ENCODE measurements at regions of chr16 and their contacts with region 1.

Region 1: GRCh38 chr16:70770626-70771552 is 30.1 kb downstream of the VAC14 start:
- DNase-seq: peak; percentile 79
- H3K4me3 ChIP-seq: no peak overlapping the region; a peak in 1 of 4 replicates
- H3K27ac ChIP-seq: 0 out of 4 replicates have a peak overlapping the region, but pooled peaks of 1 of the 2 experiments have one; percentile 5
- H3K4me1 ChIP-seq: peaks cover 0 to 3% of the 10 kb centered on the region in 2 experiments; a peak in 1 of 4 replicates
- H3K27me3 ChIP-seq: no peaks in the 10 kb centered on the region
- CTCF ChIP-seq: peak; percentile 93
- EP300 ChIP-seq: no peak
- RAD21 ChIP-seq: peak; percentile 94

Region 2: DNA sequence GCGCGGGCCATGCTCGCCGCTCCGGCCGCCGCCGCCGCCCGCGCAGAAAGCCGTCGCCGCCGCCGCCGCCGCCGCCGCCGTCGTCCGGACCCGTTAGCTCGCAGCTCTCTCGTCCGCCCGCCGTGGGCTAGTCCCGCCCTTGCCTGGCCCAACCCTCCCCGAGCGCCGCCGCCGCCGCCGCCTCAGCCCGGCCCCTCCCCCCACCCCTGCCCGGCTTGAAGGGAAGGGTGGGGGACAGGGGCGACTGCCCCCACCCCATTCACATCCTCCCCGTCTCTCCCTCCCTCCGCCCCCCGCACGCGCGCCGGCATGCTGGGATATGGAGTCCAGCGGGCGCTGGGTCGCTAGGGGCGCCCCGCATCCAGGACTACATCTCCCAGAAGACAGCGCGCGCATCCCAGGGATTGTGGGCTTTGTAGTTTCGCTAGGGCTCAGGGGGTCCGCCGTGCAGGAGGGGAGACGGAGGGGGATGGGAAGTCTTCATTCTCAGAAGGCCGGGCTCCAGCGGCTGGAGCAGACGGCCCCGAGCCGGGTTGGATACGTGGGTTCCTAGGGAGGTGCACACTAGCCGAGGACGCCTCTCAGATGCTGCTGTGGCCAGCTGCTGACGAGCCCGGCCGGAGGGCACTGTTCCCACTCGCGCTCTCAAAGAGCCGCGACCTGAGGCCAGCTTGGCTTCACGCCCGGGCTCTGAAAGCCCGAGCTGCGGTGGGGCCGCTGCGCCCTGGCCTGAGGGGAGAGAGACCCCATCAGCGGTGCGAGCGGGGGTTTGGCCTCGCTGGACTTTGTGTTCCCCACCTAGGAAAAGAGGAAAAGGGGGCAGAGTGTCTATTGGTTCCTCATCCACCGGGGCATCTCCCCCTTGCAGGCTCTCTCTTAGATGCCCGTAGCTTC is 331.7 kb before region 1 on chr16 and contains the start of gene ST3GAL2:
- CTCF ChIA-PET with region 1: no interaction called
- POLR2A ChIA-PET with region 1: no interaction called
- DNase-seq: peak; percentile 98
- H3K4me3 ChIP-seq: peak within 1 kb of the TSS; percentile 73 to 78
- H3K27ac ChIP-seq: peak within 1 kb of the TSS; percentile 90
- H3K4me1 ChIP-seq: peaks cover 9 to 29% of the 10 kb centered on the region in 2 experiments; a peak in 3 of 4 replicates
- H3K27me3 ChIP-seq: no peaks in the 10 kb centered on the region
- CTCF ChIP-seq: no peak
- EP300 ChIP-seq: peak in 1 of 2 experiments; percentile 67; a peak in 1 of 4 replicates
- RAD21 ChIP-seq: no peak
- polyA plus RNA-seq, gene ST3GAL2: 11.4 and 19.9 TPM in 2 replicates

Region 3: DNA sequence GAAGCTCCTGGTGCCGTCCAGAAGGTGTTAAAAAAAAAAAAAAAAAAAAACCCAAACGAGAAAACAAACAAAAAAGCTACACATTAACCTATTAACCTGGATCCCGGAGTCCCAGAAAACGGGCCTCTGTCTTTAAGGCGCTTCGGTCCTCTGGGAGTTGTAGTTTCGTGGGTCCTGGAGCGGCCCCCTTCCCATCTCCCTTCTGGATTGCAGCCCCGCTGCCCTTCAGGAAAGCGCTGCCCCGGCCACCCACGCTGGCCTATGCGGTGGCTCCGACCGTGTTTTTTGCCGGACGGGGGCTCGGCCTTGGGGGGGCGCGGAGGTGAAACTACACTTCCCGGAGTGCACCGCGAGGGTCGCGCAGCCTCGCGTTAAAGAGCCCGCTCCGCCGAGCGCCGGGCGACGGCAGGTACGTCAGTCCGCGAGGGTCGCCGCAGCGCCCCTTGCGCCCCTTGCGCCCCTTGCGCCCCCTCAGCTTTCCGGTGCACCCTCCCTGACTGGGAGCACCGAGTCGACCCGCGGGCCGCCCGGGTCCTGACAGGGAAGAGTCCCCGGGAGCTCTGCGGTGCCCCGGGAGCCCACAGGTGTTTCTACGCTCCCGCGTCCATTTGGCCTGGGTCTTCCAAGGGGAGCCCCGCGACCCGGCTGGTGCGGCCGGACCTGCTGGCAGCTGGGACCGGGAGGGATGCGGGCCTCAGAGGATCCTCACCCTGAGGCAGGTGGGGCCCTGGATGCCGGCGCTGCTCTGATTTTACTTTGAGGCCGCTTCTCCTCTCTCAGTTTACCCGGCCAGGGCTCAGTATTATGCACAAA is 316.5 kb before region 1 on chr16 and contains the start of gene FCSK:
- CTCF ChIA-PET with region 1: no interaction called
- POLR2A ChIA-PET with region 1: no interaction called
- DNase-seq: peak; percentile 91
- H3K4me3 ChIP-seq: peak within 1 kb of the TSS; percentile 79 to 99
- H3K27ac ChIP-seq: peak within 1 kb of the TSS; percentile 88 to 96
- H3K4me1 ChIP-seq: peaks cover 0 to 3% of the 10 kb centered on the region in 2 experiments; a peak in 1 of 4 replicates
- H3K27me3 ChIP-seq: no peaks in the 10 kb centered on the region
- CTCF ChIP-seq: no peak
- EP300 ChIP-seq: no peak
- RAD21 ChIP-seq: peak; percentile 17
- polyA plus RNA-seq, gene FCSK: 9.7 and 10.4 TPM in 2 replicates

Region 4: GRCh38 chr16:70653809-70654771 is 116.8 kb before region 1 on chr16:
- CTCF ChIA-PET with region 1: interaction called, 57 read pairs
- POLR2A ChIA-PET with region 1: interaction called, 4 read pairs
- DNase-seq: peak; percentile 83
- H3K4me3 ChIP-seq: peak overlapping the region; percentile 14 to 27; a peak in 3 of 4 replicates
- H3K27ac ChIP-seq: peak overlapping the region; percentile 22 to 53
- H3K4me1 ChIP-seq: peaks cover 0 to 7% of the 10 kb centered on the region in 2 experiments; a peak in 1 of 4 replicates
- H3K27me3 ChIP-seq: no peaks in the 10 kb centered on the region
- CTCF ChIP-seq: peak; percentile 94
- EP300 ChIP-seq: peak in 1 of 2 experiments; percentile 81; a peak in 2 of 4 replicates
- RAD21 ChIP-seq: peak; percentile 99

Region 5: GRCh38 chr16:70691223-70692129 is 79.4 kb before region 1 on chr16:
- CTCF ChIA-PET with region 1: interaction called, 39 read pairs
- POLR2A ChIA-PET with region 1: interaction called, 5 read pairs
- DNase-seq: peak; percentile 86
- H3K4me3 ChIP-seq: no peak overlapping the region
- H3K27ac ChIP-seq: peak overlapping the region; percentile 88 to 98
- H3K4me1 ChIP-seq: peaks cover 70 to 100% of the 10 kb centered on the region in 2 experiments
- H3K27me3 ChIP-seq: no peaks in the 10 kb centered on the region
- CTCF ChIP-seq: no peak
- EP300 ChIP-seq: peak; percentile 15 to 43; a peak in 2 of 4 replicates
- RAD21 ChIP-seq: no peak

Region 6: GRCh38 chr16:70725912-70726828 is 44.7 kb before region 1 on chr16:
- CTCF ChIA-PET with region 1: interaction called, 18 read pairs
- POLR2A ChIA-PET with region 1: no interaction called
- DNase-seq: no peak
- H3K4me3 ChIP-seq: no peak overlapping the region
- H3K27ac ChIP-seq: peak overlapping the region in 1 of 2 experiments; percentile 73; a peak in 1 of 4 replicates
- H3K4me1 ChIP-seq: peaks cover 0 to 34% of the 10 kb centered on the region in 2 experiments; a peak in 1 of 4 replicates
- H3K27me3 ChIP-seq: no peaks in the 10 kb centered on the region
- CTCF ChIP-seq: no peak
- EP300 ChIP-seq: no peak
- RAD21 ChIP-seq: no peak

Region 7: GRCh38 chr16:70750893-70751475 is 19.9 kb before region 1 on chr16:
- CTCF ChIA-PET with region 1: interaction called, 54 read pairs
- POLR2A ChIA-PET with region 1: no interaction called
- DNase-seq: no peak
- H3K4me3 ChIP-seq: no peak overlapping the region
- H3K27ac ChIP-seq: no peak overlapping the region
- H3K4me1 ChIP-seq: peaks cover 32 to 34% of the 10 kb centered on the region in 2 experiments; a peak in 3 of 4 replicates
- H3K27me3 ChIP-seq: no peaks in the 10 kb centered on the region
- CTCF ChIP-seq: no peak
- EP300 ChIP-seq: no peak
- RAD21 ChIP-seq: no peak

Region 8: DNA sequence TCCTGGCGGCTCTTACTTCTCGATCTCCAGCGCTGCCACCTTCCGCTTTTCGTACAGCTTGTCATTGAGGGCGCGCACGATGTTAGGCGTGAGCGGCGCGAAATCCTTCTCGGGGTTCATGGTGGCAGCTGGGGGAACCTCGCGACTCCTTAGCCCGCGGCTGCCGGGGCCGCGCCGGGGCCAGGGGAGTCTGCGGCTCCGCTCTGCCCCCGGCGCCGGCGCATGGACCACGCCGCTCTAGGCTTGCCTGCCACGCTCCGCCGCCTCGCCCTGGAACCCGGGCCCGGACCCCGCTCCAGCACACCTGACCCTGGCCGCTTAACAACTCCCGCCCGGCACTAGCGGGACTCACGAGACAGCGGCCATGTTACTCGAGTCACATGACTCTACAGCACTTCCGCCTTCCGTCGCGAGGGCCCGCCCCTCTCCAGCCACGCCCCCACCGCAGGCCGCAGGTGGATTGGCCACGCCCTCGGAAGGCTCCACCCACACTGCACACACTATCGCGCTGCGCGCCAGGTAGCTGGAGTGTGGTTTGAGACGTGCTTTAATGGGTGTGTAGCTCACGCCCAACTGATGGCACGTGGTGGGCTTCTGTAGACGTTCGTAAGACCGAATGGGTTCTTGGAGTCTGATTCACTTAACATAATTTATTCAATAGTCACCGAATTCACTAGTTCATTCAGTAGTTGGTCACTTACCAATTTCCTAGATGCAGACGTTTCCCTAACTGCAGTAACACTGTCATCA is 30.1 kb after region 1 on chr16 and contains the start of gene VAC14:
- CTCF ChIA-PET with region 1: interaction called, 19 read pairs
- POLR2A ChIA-PET with region 1: no interaction called
- DNase-seq: peak; percentile 97
- H3K4me3 ChIP-seq: peak within 1 kb of the TSS; percentile 89 to 99
- H3K27ac ChIP-seq: peak within 1 kb of the TSS; percentile 6 to 22; a peak in 2 of 4 replicates
- H3K4me1 ChIP-seq: peaks cover 6 to 11% of the 10 kb centered on the region in 2 experiments
- H3K27me3 ChIP-seq: no peaks in the 10 kb centered on the region
- CTCF ChIP-seq: no peak
- EP300 ChIP-seq: no peak
- RAD21 ChIP-seq: no peak
- polyA plus RNA-seq, gene VAC14: 30.9 and 33.2 TPM in 2 replicates

Measured in SK-N-SH (cell line).